ENCODE measurements at regions of chr9 and their contacts with region 1.

Region 1: GRCh38 chr9:100084734-100085133 is 14.1 kb downstream of the ERP44 start:
- DNase-seq: no peak
- ATAC-seq: peak; percentile 65
- H3K4me3 Mint-ChIP-seq: peak overlapping the region; percentile 78
- H3K27ac Mint-ChIP-seq: peak overlapping the region; percentile 94
- H3K4me1 Mint-ChIP-seq: peaks cover 87% of the 10 kb centered on the region
- H3K27me3 Mint-ChIP-seq: no peaks in the 10 kb centered on the region
- CTCF ChIP-seq: no peak

Region 2: DNA sequence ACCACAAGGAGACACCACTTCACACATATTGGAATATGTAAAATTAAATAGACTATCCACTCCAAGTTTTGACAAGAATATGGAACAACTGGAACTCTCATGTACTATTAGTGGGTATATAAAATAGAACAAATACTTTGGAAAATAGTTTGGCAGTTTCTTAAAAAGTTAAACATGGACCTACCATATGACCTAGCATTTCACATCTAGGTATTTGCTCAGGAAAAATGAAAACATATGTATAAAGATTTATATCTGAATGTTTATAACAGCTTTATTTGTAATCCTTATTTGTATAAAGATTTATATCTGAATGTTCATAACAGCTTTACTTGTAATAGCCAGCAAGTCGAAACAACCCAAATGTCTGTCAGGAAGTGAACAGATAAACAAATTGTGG is 35.2 kb before region 1 on chr9:
- CTCF ChIA-PET with region 1: no interaction called
- POLR2A ChIA-PET with region 1: no interaction called
- intact Hi-C with region 1: loop called (anchors 5 kb)
- DNase-seq: no peak
- ATAC-seq: no peak
- H3K4me3 Mint-ChIP-seq: no peak overlapping the region
- H3K27ac Mint-ChIP-seq: no peak overlapping the region
- H3K4me1 Mint-ChIP-seq: peaks cover 23% of the 10 kb centered on the region
- H3K27me3 Mint-ChIP-seq: no peaks in the 10 kb centered on the region
- CTCF ChIP-seq: no peak

Region 3: GRCh38 chr9:100058699-100059579 is 25.8 kb before region 1 on chr9:
- CTCF ChIA-PET with region 1: no interaction called
- POLR2A ChIA-PET with region 1: interaction called, 3 read pairs
- intact Hi-C with region 1: loop called (anchors 1 kb)
- DNase-seq: no peak
- ATAC-seq: peak; percentile 77
- H3K4me3 Mint-ChIP-seq: peak overlapping the region; percentile 67
- H3K27ac Mint-ChIP-seq: peak overlapping the region; percentile 72
- H3K4me1 Mint-ChIP-seq: peaks cover 51% of the 10 kb centered on the region
- H3K27me3 Mint-ChIP-seq: no peaks in the 10 kb centered on the region
- CTCF ChIP-seq: no peak

Region 4: GRCh38 chr9:100134731-100135130 is 50.0 kb after region 1 on chr9:
- CTCF ChIA-PET with region 1: no interaction called
- POLR2A ChIA-PET with region 1: no interaction called
- intact Hi-C with region 1: no loop called
- DNase-seq: no peak
- ATAC-seq: no peak
- H3K4me3 Mint-ChIP-seq: no peak overlapping the region
- H3K27ac Mint-ChIP-seq: no peak overlapping the region
- H3K4me1 Mint-ChIP-seq: no peaks in the 10 kb centered on the region
- H3K27me3 Mint-ChIP-seq: no peaks in the 10 kb centered on the region
- CTCF ChIP-seq: no peak

Measured in activated B cell treated with CpG ODN at 0.5 μM for 24 hours (primary cell).